K562 (cell line): ENCODE measurements at regions of chr5 and their contacts with region 1.

Region 1: GRCh38 chr5:172028167-172028566 is 21.7 kb upstream of the FBXW11 start:
- DNase-seq: no peak
- ATAC-seq: no peak
- H3K4me3 ChIP-seq: no peak overlapping the region
- H3K27ac ChIP-seq: no peak overlapping the region
- H3K4me1 ChIP-seq: no peaks in the 10 kb centered on the region
- H3K27me3 ChIP-seq: peaks cover 4 to 15% of the 10 kb centered on the region in 2 experiments; a peak in 4 of 5 replicates
- CTCF ChIP-seq: no peak
- EP300 ChIP-seq: no peak
- POLR2A ChIP-seq: no peak
- RAD21 ChIP-seq: no peak

Region 2: GRCh38 chr5:171893290-171893886 is 134.8 kb before region 1 on chr5:
- CTCF ChIA-PET with region 1: no interaction called
- POLR2A ChIA-PET with region 1: no interaction called
- in situ Hi-C with region 1: no loop called
- intact Hi-C with region 1: no loop called
- DNase-seq: no peak
- ATAC-seq: no peak
- H3K4me3 ChIP-seq: no peak overlapping the region
- H3K27ac ChIP-seq: no peak overlapping the region
- H3K4me1 ChIP-seq: no peaks in the 10 kb centered on the region
- H3K27me3 ChIP-seq: no peaks in the 10 kb centered on the region
- CTCF ChIP-seq: no peak
- EP300 ChIP-seq: no peak
- POLR2A ChIP-seq: no peak
- RAD21 ChIP-seq: no peak

Region 3: GRCh38 chr5:171913987-171914273 is 114.2 kb before region 1 on chr5:
- CTCF ChIA-PET with region 1: no interaction called
- POLR2A ChIA-PET with region 1: no interaction called
- in situ Hi-C with region 1: loop called (anchors 10 kb)
- intact Hi-C with region 1: no loop called
- DNase-seq: no peak
- ATAC-seq: no peak
- H3K4me3 ChIP-seq: no peak overlapping the region
- H3K27ac ChIP-seq: no peak overlapping the region
- H3K4me1 ChIP-seq: no peaks in the 10 kb centered on the region
- H3K27me3 ChIP-seq: no peaks in the 10 kb centered on the region
- CTCF ChIP-seq: no peak
- EP300 ChIP-seq: no peak
- POLR2A ChIP-seq: no peak
- RAD21 ChIP-seq: no peak

Region 4: GRCh38 chr5:172044631-172045314 is 16.6 kb after region 1 on chr5:
- CTCF ChIA-PET with region 1: no interaction called
- POLR2A ChIA-PET with region 1: no interaction called
- in situ Hi-C with region 1: no loop called
- intact Hi-C with region 1: no loop called
- DNase-seq: peak in 2 of 4 experiments; percentile 35 to 41
- ATAC-seq: peak; percentile 71
- H3K4me3 ChIP-seq: no peak overlapping the region
- H3K27ac ChIP-seq: no peak overlapping the region
- H3K4me1 ChIP-seq: peaks cover 0 to 3% of the 10 kb centered on the region in 2 experiments; a peak in 2 of 5 replicates
- H3K27me3 ChIP-seq: peaks cover 15 to 21% of the 10 kb centered on the region in 2 experiments; a peak in 4 of 5 replicates
- CTCF ChIP-seq: peak; percentile 26 to 49 (median 46); a peak in 4 of 6 replicates
- EP300 ChIP-seq: no peak
- POLR2A ChIP-seq: no peak
- RAD21 ChIP-seq: peak; percentile 24 to 52; a peak in 3 of 4 replicates